Mammary epithelial cell (primary cell): ENCODE measurements at regions of chr4 and their contacts with region 1.

Region 1: DNA sequence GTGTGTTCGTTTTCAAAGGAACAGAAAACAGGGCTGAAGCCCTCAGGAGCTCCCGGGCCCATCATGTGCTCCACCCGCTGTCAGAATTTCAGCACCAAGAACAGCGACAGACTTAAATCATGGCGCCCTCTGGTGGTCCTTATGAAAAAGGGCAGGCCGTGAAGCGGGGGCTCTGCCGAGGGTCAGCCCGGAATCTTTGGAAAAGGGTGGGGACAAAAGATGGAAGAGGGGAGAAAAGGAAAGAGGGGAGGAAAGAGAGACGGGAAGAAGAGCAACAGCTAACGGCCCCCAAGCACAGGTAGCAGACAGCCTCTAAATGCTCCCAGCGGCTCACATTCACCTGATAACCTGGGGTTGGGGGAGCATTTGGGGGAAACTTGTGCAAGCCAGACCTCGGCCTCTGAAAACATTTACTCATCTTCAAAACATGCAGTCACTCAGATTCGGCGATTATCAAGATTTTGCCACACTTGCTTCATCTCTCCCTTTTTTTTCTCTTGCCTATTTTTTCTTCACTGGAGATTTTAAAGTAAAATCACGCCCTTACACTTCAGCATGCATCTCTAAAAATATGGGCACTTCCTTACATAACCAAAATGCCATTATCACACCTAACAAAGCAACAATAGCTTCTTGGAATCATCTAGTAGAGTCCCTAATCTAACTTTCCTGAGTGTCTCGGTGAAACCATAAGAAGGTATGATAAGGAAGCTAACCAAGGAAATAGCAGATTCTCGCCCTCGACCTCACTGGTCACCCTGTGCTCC is 28.1 kb upstream of the MAN2B2 start:
- DNase-seq: peak; percentile 28
- H3K4me3 ChIP-seq: no peak overlapping the region
- H3K27ac ChIP-seq: no peak overlapping the region
- H3K4me1 ChIP-seq: no peaks in the 10 kb centered on the region
- H3K27me3 ChIP-seq: no peaks in the 10 kb centered on the region
- CTCF ChIP-seq: peak; percentile 69 to 94

Region 2: DNA sequence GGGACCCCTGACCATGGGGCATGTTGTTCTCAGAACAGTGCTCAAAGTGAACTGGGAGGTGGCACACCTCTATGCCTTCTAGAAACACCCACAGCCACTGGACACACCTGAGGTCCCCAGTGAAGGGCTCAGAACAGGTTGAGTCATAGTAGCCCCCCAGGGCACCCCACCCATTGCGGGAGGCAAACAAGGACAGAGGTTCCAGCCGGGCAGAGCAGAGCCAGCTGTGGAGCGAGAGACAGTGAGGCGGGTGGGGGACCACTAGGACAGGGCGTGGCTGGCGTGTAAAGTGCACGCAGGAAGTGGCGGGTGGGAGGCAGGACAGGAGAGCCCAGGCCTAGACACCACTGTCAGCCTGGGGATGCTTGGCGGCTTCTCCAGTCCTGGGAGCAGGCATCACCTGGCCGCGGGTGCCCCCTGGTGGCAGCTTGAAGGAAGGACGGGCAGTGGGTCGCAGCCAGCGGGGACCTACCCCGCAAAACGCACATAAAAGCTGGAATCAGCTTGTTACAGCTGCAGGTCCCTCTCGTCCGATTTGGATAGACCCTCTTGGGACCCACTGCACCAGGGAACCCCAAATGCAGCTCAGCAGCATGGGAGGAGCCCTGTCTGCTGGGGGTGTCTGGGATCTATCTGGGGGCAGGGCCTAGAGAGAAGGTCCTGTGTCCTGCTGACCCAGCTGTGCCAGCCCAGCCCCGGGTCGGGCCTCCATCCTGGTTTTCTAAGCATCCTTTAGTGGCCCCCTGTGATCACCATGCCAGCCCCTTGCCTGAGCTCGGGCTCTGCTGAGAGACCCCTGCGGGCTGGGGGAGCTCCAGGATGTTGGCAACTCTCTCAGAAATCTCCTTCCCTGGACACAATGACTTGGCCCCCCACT is 219.6 kb before region 1 on chr4:
- CTCF ChIA-PET with region 1: interaction called, 4 read pairs
- dilution Hi-C with region 1: no loop called
- in situ Hi-C with region 1: no loop called
- intact Hi-C with region 1: loop called (anchors 1 kb)
- DNase-seq: peak; percentile 40
- H3K4me3 ChIP-seq: no peak overlapping the region
- H3K27ac ChIP-seq: no peak overlapping the region
- H3K4me1 ChIP-seq: peaks cover 9% of the 10 kb centered on the region
- H3K27me3 ChIP-seq: no peaks in the 10 kb centered on the region
- CTCF ChIP-seq: peak; percentile 78 to 92

Region 3: GRCh38 chr4:6470502-6471306 is 76.2 kb before region 1 on chr4:
- CTCF ChIA-PET with region 1: no interaction called
- dilution Hi-C with region 1: no loop called
- in situ Hi-C with region 1: no loop called
- intact Hi-C with region 1: loop called (anchors 5 kb)
- DNase-seq: peak; percentile 30
- H3K4me3 ChIP-seq: peak overlapping the region in 2 of 3 experiments; percentile 19 to 35
- H3K27ac ChIP-seq: no peak overlapping the region
- H3K4me1 ChIP-seq: peaks cover 8% of the 10 kb centered on the region
- H3K27me3 ChIP-seq: peaks cover 23% of the 10 kb centered on the region
- CTCF ChIP-seq: no peak

Region 4: DNA sequence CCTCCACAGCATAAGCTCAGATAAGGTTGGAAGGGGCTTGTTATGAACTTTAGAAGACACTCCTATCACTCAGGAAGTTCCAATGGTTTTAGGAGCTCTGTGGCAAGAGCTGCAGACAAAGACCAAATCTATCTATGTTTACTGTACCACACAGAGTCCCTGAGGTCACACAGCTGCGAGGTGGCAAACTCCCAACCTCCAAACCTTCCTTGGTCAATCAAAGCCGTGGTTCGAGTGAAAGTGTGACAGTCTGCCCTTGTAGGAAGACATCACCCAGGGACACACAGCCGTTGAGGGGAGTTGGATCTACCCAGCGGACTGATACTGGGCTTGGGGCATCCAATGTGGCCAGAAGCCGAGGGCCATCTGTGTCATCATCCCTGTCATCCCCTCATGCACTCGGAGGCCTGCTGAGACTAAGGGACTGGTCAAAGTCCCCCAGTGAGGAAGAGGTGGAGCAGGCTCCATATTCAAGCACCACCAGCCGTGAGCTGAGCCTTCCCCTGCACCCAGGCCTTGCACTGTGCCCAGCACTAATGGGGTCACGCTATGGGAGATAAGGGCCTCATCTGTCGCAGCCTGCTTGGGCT is 54.9 kb after region 1 on chr4:
- CTCF ChIA-PET with region 1: no interaction called
- dilution Hi-C with region 1: loop called (anchors 5 kb)
- in situ Hi-C with region 1: no loop called
- intact Hi-C with region 1: no loop called
- DNase-seq: no peak
- H3K4me3 ChIP-seq: no peak overlapping the region
- H3K27ac ChIP-seq: no peak overlapping the region
- H3K4me1 ChIP-seq: no peaks in the 10 kb centered on the region
- H3K27me3 ChIP-seq: no peaks in the 10 kb centered on the region
- CTCF ChIP-seq: no peak